ENCODE measurements at regions of chr4 and their contacts with region 1.

Region 1: DNA sequence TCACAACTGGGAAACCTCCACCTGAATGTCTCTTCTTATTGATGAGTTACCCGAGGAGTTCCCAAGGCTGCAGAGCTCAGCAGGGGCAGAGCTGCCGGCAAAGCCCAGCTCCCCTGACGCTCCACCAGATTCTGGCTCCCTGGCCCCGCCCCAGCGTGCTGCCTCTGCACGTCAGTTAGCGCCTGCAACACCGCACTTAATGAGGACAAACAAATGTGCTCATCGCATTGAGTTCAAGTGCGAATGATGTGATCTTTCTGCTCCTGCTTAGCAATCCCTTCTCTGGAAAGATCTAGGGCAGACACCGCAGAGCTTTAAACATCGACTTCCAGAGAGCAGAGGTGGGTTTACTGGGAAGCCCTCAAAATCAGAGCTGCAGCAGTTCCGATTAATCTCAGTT is 55.5 kb upstream of the FBXW7 start:
- DNase-seq: peak; percentile 8
- H3K4me3 Mint-ChIP-seq: peak overlapping the region; percentile 23
- H3K27ac Mint-ChIP-seq: no peak overlapping the region
- H3K4me1 Mint-ChIP-seq: peaks cover 21% of the 10 kb centered on the region
- H3K27me3 Mint-ChIP-seq: no peaks in the 10 kb centered on the region
- CTCF ChIP-seq: no peak

Region 2: DNA sequence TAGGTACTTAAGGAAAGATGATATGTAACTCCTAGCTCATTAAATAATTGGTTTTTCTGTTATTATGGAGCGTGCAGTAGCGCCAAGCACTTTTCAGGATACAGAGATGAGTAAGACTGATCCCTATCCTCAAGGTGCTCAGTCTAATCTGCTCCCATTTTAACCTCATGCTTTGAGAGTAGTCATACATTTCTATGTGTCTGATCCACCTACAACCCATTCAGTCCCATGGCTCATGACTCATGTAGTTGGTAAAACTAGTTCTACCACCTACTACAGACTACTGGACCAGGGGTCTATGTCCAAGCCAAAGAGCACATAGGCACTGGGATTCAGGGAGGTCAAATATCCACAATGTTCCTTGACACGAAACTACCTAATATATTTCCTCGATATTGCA is 27.6 kb after region 1 on chr4:
- CTCF ChIA-PET with region 1: no interaction called
- POLR2A ChIA-PET with region 1: no interaction called
- intact Hi-C with region 1: no loop called
- DNase-seq: no peak
- H3K4me3 Mint-ChIP-seq: no peak overlapping the region
- H3K27ac Mint-ChIP-seq: no peak overlapping the region
- H3K4me1 Mint-ChIP-seq: no peaks in the 10 kb centered on the region
- H3K27me3 Mint-ChIP-seq: no peaks in the 10 kb centered on the region
- CTCF ChIP-seq: no peak

Region 3: GRCh38 chr4:152634110-152634760 is 42.8 kb after region 1 on chr4:
- CTCF ChIA-PET with region 1: interaction called, 3 read pairs
- POLR2A ChIA-PET with region 1: interaction called, 18 read pairs
- intact Hi-C with region 1: no loop called
- DNase-seq: peak; percentile 51
- H3K4me3 Mint-ChIP-seq: no peak overlapping the region
- H3K27ac Mint-ChIP-seq: peak overlapping the region; percentile 74
- H3K4me1 Mint-ChIP-seq: no peaks in the 10 kb centered on the region
- H3K27me3 Mint-ChIP-seq: no peaks in the 10 kb centered on the region
- CTCF ChIP-seq: no peak

Region 4: DNA sequence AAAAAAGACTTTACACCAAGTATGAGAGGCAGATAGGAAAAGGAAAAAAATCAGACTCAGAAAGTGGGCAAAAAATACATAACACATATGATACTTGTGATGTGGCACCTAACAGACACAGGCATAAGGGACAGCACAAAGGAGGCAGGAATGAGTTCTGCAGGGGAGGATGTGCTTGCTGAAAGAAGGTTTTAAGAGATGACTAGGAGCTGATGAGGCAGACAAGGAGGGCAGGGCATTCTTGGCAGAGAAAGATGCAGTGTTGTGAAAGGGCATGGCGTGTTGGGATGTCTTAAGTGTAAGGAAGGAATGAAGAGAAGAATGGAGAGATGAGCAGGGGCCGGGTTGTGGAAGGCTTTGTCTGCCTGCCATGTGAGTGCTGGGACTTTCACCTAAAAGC is 138.1 kb after region 1 on chr4:
- CTCF ChIA-PET with region 1: no interaction called
- POLR2A ChIA-PET with region 1: no interaction called
- intact Hi-C with region 1: no loop called
- DNase-seq: peak; percentile 80
- H3K4me3 Mint-ChIP-seq: no peak overlapping the region
- H3K27ac Mint-ChIP-seq: no peak overlapping the region
- H3K4me1 Mint-ChIP-seq: no peaks in the 10 kb centered on the region
- H3K27me3 Mint-ChIP-seq: no peaks in the 10 kb centered on the region
- CTCF ChIP-seq: no peak

Region 5: DNA sequence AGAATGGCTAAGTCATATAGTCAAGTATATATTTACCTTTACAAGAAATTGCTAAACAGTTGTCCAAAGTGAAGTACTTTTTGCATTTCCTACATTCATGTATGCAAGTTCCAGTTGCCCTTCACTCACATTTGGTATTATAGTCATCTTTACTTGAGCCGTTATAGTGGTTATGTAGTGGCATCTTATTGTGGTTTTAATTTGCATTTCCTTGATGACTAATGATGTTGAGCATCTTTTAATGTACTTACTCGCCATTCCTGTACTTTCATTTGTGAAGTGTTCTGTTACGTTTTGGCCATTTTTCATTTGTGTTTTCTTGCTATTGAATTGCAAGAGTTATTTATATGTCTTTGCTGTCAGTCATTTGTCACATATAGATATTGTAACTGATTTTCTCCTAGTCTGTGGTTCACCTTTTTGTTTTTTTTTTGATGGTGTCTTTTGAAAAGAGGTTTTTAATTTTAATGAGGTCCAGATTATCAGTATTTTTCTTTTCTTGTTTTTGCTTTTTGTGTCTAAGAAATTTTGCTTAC is 216.0 kb after region 1 on chr4:
- CTCF ChIA-PET with region 1: no interaction called
- POLR2A ChIA-PET with region 1: no interaction called
- intact Hi-C with region 1: no loop called
- DNase-seq: peak; percentile 21
- H3K4me3 Mint-ChIP-seq: no peak overlapping the region
- H3K27ac Mint-ChIP-seq: no peak overlapping the region
- H3K4me1 Mint-ChIP-seq: peaks cover 5% of the 10 kb centered on the region
- H3K27me3 Mint-ChIP-seq: no peaks in the 10 kb centered on the region
- CTCF ChIP-seq: no peak